OCI-LY7 (cell line): ENCODE measurements at regions of chr7 and their contacts with region 1.

Region 1: GRCh38 chr7:155796381-155797261 is 15.6 kb downstream of the SHH start:
- DNase-seq: peak; percentile 44
- H3K4me3 ChIP-seq: no peak overlapping the region
- H3K27ac ChIP-seq: no peak overlapping the region
- H3K4me1 ChIP-seq: no peaks in the 10 kb centered on the region
- CTCF ChIP-seq: peak; percentile 59

Region 2: DNA sequence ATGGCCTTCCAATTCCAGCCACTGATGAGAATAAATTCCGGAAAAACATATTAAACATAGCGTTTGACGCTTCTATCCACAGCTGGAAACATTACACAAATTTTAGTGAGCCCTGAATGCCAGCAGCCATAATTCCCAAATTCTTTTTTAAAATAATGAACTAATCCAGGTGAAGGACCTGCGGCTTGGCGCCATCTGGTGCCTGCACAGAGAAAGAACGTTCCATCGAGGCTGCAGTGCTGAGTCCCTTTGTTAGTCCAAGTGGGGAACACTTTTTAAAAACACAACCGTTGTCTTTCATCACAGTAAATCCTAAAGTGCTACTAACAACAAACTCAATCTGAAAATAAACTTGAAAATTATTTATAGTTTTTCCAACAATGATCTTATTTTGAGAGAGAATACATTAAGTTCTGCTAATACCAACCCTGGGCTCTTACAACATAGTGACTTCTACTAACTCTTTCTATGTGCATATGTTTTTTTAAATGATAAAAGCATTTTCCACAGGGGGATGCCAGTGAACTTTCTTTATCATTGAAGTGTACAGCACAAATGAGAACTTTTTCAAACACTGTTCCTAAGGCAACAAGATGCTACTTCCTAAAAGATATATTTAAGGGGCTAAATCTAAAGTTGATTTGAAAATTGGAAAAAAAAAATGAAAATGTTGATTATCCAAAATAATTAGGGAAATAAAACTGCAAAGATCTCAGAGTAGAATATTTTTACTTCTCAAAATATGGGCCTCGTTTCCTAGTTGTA is 677.0 kb after region 1 on chr7:
- CTCF ChIA-PET with region 1: no interaction called
- POLR2A ChIA-PET with region 1: interaction called, 6 read pairs
- intact Hi-C with region 1: loop called (anchors 5 kb)
- DNase-seq: peak; percentile 42
- H3K4me3 ChIP-seq: no peak overlapping the region
- H3K27ac ChIP-seq: no peak overlapping the region
- H3K4me1 ChIP-seq: no peaks in the 10 kb centered on the region
- CTCF ChIP-seq: peak; percentile 94

Region 3: DNA sequence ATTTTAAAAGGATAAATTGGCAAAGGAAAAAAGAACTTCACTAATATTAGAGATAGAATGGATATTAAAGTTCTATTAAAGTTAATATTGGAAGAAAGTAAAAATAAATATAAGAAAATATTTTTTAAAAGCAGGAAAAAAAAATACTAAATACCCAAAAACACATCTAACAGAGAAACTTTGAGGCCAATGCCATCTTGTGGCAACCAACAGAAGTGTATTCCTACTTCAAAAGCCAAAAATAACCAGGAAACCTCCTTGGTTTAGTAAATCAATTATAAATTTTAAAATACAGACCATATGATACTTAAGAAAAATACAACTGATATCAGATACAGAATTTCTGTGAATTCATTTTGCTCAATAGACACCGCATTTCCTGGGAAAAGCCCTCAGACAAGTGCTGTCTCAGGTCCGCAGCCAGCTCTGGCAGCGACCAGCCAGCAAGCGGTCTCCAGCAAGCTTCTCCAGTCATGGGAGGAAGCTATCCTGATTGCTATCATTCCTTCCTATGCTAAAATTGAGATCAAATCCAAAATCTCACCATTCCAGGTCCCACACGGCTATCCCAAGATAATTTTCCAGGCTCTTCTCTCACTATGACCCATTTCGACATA is 1031.1 kb after region 1 on chr7:
- CTCF ChIA-PET with region 1: no interaction called
- POLR2A ChIA-PET with region 1: no interaction called
- intact Hi-C with region 1: loop called (anchors 10 kb)
- DNase-seq: peak; percentile 30
- H3K4me3 ChIP-seq: no peak overlapping the region
- H3K27ac ChIP-seq: no peak overlapping the region
- H3K4me1 ChIP-seq: peaks cover 18% of the 10 kb centered on the region
- CTCF ChIP-seq: peak; percentile 76